ENCODE measurements at regions of chr3 and their contacts with region 1.

Region 1: GRCh38 chr3:24503616-24504113 is 9.0 kb upstream of the THRB start:
- DNase-seq: no peak
- H3K4me3 ChIP-seq: no peak overlapping the region
- H3K27ac ChIP-seq: no peak overlapping the region
- H3K4me1 ChIP-seq: no peaks in the 10 kb centered on the region
- H3K27me3 ChIP-seq: no peaks in the 10 kb centered on the region
- CTCF ChIP-seq: no peak
- POLR2A ChIP-seq: no peak

Region 2: DNA sequence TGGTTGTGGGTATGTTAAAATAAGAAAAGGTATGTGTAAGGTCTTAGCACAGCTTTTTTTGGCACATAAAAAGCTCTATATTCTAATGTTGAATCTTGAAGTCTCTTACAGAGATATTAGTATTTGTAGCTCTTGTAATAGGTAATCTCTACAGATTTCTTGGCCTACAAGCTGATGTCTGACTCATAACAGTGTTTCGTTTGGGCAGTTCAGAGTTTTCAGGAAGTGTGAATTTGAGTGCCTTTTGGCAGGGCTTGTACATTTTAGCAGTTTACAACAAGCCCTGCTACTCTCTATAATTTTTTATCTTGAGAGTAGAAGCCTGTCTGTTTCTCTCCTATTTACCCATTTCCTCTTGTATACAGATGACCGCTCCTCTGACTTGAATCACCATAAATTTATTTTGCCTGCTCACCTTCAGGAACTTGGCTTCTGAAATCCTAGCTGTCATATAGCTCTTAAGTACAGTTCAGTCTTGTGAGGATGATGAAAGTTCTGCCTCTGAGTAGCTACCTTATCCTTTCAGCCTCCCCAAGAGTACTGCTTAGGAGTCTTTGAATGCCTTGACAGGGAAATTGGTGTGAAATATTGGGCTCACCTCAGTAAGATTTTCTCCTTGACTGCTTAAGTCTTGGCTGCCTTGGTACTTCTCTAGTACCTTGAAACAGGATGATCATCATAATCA is 504.5 kb after region 1 on chr3:
- intact Hi-C with region 1: loop called (anchors 5 kb)
- DNase-seq: no peak
- H3K4me3 ChIP-seq: no peak overlapping the region
- H3K27ac ChIP-seq: no peak overlapping the region
- H3K4me1 ChIP-seq: no peaks in the 10 kb centered on the region
- H3K27me3 ChIP-seq: no peaks in the 10 kb centered on the region
- CTCF ChIP-seq: no peak
- POLR2A ChIP-seq: no peak

Measured in breast epithelium (tissue), 4 donors.